Activated naive CD4-positive, alpha-beta T cell treated with anti-CD3 and anti-CD28 coated beads for 36 hours (primary cell): ENCODE measurements at regions of chr13 and their contacts with region 1.

Region 1: DNA sequence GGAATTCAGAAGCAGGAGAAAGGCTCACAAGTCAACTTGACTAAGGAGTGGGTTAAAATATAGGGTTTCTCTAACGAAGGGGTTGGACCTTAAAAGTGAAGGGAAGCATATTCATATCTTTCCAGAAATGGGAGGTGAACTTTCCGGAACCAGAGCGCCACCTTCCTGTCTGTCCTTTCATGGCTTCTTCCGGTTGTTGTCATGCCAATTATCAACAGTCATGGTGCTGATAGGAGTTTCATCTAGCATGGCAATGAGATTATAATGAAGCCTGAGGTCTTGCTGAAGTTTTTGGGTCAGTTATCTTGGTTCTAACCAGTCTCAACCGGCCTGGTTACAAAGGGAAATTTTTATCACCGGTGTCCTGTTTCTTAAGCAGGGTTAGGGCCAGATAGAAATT is 162.9 kb upstream of the NBEA start:
- DNase-seq: no peak
- H3K4me3 Mint-ChIP-seq: no peak overlapping the region
- H3K27ac Mint-ChIP-seq: no peak overlapping the region
- H3K4me1 Mint-ChIP-seq: no peaks in the 10 kb centered on the region
- H3K27me3 Mint-ChIP-seq: peaks cover 2% of the 10 kb centered on the region

Region 2: DNA sequence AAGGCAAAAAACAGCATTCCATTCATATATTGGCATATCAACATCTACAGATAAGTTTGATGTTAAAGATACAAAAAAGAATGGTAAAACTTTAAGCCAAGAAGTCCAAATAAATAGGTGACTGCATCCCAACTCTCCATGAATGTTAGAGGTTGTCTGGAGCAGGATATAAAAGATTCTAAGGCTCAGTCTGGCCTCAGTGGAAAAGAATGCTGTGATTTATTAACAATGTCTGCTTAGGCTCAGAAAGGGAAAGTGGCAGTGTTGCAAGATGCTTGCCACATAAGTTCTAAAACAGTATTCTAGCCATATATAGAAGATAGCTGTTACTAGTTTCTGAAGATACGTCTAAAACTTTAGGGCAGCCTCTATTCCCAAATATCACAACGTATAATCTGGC is 16.9 kb before region 1 on chr13:
- CTCF ChIA-PET with region 1: no interaction called
- intact Hi-C with region 1: no loop called
- DNase-seq: no peak
- H3K4me3 Mint-ChIP-seq: no peak overlapping the region
- H3K27ac Mint-ChIP-seq: no peak overlapping the region
- H3K4me1 Mint-ChIP-seq: no peaks in the 10 kb centered on the region
- H3K27me3 Mint-ChIP-seq: no peaks in the 10 kb centered on the region

Region 3: GRCh38 chr13:34826432-34826831 is 47.3 kb after region 1 on chr13:
- CTCF ChIA-PET with region 1: no interaction called
- intact Hi-C with region 1: loop called (anchors 5 kb)
- DNase-seq: no peak
- H3K4me3 Mint-ChIP-seq: no peak overlapping the region
- H3K27ac Mint-ChIP-seq: no peak overlapping the region
- H3K4me1 Mint-ChIP-seq: no peaks in the 10 kb centered on the region
- H3K27me3 Mint-ChIP-seq: peaks cover 2% of the 10 kb centered on the region

Region 4: GRCh38 chr13:35475960-35476943 is 697.1 kb after region 1 on chr13 and contains the start of gene MAB21L1:
- CTCF ChIA-PET with region 1: no interaction called
- intact Hi-C with region 1: no loop called
- DNase-seq: peak; percentile 21
- H3K4me3 Mint-ChIP-seq: peak within 1 kb of the TSS; percentile 75
- H3K27ac Mint-ChIP-seq: no peak within 1 kb of the TSS
- H3K4me1 Mint-ChIP-seq: peaks cover 28% of the 10 kb centered on the region
- H3K27me3 Mint-ChIP-seq: peaks cover 62% of the 10 kb centered on the region
- total RNA-seq, gene MAB21L1: not detected